HCT116 (cell line): ENCODE measurements at regions of chr13 and their contacts with region 1.

Region 1: DNA sequence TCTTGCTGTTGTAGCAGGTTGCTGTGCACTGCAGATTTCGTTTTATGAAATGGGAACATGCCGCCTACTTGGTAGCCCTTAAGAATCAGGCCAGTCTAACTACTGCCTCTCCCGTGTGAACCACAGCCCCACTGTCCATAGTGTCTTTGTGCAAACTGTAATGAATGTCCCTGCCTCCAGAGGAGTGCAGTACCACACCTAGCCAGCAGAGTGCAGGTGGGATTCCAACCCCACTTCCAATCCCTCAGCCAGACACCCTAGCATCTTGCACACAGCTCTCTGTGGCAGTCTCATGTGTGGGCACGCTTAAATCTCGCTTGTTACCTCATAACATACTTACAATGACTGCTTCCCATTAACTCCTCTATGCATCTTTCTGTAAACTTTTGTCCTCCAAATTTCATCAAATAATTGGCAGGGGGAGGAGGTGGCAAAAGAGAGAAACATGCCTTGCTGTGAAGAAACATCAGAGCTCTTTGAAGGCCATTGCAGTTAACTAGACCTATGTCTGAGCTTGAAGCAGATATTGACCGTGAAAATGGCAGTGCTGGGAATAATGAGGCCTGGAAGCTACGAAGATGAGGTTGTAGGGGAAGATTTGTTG is 47.2 kb downstream of the ZAR1L start:
- DNase-seq: peak; percentile 51
- ATAC-seq: peak; percentile 99
- H3K4me3 ChIP-seq: no peak overlapping the region
- H3K27ac ChIP-seq: no peak overlapping the region
- H3K4me1 ChIP-seq: peaks cover 2 to 9% of the 10 kb centered on the region in 2 experiments; a peak in 1 of 4 replicates
- H3K27me3 ChIP-seq: no peaks in the 10 kb centered on the region
- CTCF ChIP-seq: peak; percentile 40 to 97 (median 96); a peak in 5 of 6 replicates
- POLR2A ChIP-seq: no peak
- RAD21 ChIP-seq: peak; percentile 53

Region 2: GRCh38 chr13:32246468-32246867 is 21.5 kb before region 1 on chr13:
- CTCF ChIA-PET with region 1: interaction called, 16 read pairs
- POLR2A ChIA-PET with region 1: no interaction called
- RAD21 ChIA-PET with region 1: no interaction called
- intact Hi-C with region 1: no loop called
- DNase-seq: peak; percentile 66
- ATAC-seq: peak; percentile 100
- H3K4me3 ChIP-seq: no peak overlapping the region
- H3K27ac ChIP-seq: no peak overlapping the region
- H3K4me1 ChIP-seq: peaks cover 0 to 5% of the 10 kb centered on the region in 2 experiments; a peak in 1 of 4 replicates
- H3K27me3 ChIP-seq: no peaks in the 10 kb centered on the region
- CTCF ChIP-seq: peak; percentile 49 to 89 (median 79); a peak in 5 of 6 replicates
- POLR2A ChIP-seq: no peak
- RAD21 ChIP-seq: peak; percentile 53

Region 3: GRCh38 chr13:32496599-32497160 is 228.7 kb after region 1 on chr13:
- CTCF ChIA-PET with region 1: no interaction called
- POLR2A ChIA-PET with region 1: no interaction called
- RAD21 ChIA-PET with region 1: no interaction called
- intact Hi-C with region 1: no loop called
- DNase-seq: no peak
- ATAC-seq: no peak
- H3K4me3 ChIP-seq: no peak overlapping the region
- H3K27ac ChIP-seq: no peak overlapping the region
- H3K4me1 ChIP-seq: no peaks in the 10 kb centered on the region
- H3K27me3 ChIP-seq: no peaks in the 10 kb centered on the region
- CTCF ChIP-seq: no peak
- POLR2A ChIP-seq: no peak
- RAD21 ChIP-seq: no peak

Region 4: DNA sequence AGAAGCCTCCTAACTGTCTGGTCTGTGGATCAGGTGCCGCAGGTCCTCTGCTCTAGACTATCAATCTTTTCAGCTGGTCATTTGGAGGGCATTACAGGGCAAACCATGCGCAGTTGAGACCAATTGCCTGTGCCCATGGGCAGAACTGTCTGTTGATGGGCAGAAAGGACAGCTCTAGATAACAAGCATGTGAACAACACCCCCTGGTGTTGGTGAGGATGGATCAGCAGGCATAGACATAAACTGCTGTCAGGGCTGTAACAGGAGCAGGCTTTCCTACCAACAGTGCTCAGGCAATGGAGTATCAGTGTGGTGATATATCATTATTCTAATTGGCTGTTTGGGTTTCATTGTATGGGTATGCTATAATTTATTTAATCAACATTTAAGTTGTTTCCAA is 643.6 kb after region 1 on chr13:
- CTCF ChIA-PET with region 1: no interaction called
- POLR2A ChIA-PET with region 1: no interaction called
- RAD21 ChIA-PET with region 1: no interaction called
- intact Hi-C with region 1: loop called (anchors 5 kb)
- DNase-seq: peak; percentile 60
- ATAC-seq: peak; percentile 99
- H3K4me3 ChIP-seq: no peak overlapping the region
- H3K27ac ChIP-seq: no peak overlapping the region
- H3K4me1 ChIP-seq: no peaks in the 10 kb centered on the region
- H3K27me3 ChIP-seq: no peaks in the 10 kb centered on the region
- CTCF ChIP-seq: peak; percentile 46 to 66 (median 65); a peak in 5 of 6 replicates
- POLR2A ChIP-seq: no peak
- RAD21 ChIP-seq: peak; percentile 75